Ascending aorta (tissue), 2 donors: ENCODE measurements at regions of chr19 and their contacts with region 1.

Region 1: GRCh38 chr19:4867534-4868285 is at the start of gene PLIN3:
- DNase-seq: peak; percentile 89 to 98
- H3K4me3 ChIP-seq: peak within 1 kb of the TSS; percentile 71 to 83
- H3K27ac ChIP-seq: peak within 1 kb of the TSS; percentile 68 to 81
- H3K4me1 ChIP-seq: peaks cover 5 to 17% of the 10 kb centered on the region in 2 donors
- H3K27me3 ChIP-seq: no peaks in the 10 kb centered on the region
- CTCF ChIP-seq: no peak
- total RNA-seq, gene PLIN3: 84.3 TPM

Region 2: DNA sequence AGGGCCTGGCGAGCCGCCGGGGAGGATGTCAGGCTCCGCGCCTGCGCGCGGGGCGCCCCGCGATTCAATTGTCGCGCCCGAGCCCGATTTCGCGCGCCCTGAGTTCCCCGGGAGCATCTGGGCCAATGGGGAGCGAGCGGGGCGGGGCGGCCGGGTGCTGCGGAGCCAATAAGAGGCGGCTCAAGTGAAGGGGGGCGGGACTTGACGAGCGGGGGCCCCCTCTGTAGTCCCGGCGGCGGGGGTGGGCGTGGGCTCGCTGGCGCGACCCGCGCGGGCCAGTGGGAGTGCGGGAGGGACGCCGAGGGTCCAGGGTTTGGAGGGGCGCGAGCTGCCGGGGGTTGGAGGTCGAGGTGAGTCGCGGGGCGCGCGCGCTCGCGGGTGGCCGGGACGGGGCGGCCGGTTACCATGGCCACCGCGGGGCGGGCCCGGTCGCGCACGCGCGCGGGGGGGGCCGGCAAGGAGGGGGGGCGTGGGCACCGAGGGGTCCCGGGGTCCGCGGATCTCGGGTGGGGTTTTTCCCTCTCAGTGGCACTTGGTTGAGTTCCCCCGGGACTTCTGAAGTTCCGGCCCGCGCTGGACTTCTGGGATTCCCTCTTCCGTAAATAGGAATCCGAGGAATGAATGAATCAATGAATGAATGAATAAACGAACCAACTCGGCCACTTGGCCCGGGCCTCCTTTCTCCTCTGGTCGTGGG is 42.3 kb after region 1 on chr19:
- intact Hi-C with region 1: loop called (anchors 1 kb)
- DNase-seq: peak; percentile 71 to 94
- H3K4me3 ChIP-seq: peak overlapping the region; percentile 76 to 77
- H3K27ac ChIP-seq: no peak overlapping the region
- H3K4me1 ChIP-seq: peaks cover 18 to 22% of the 10 kb centered on the region in 2 donors
- H3K27me3 ChIP-seq: no peaks in the 10 kb centered on the region
- CTCF ChIP-seq: no peak